GM23248 (cell line): ENCODE measurements at regions of chr2 and their contacts with region 1.

Region 1: GRCh38 chr2:137910641-137911040 is 53.6 kb upstream of the HNMT start:
- DNase-seq: peak; percentile 47
- H3K4me3 ChIP-seq: no peak overlapping the region
- H3K27ac ChIP-seq: no peak overlapping the region
- H3K4me1 ChIP-seq: no peaks in the 10 kb centered on the region
- H3K27me3 ChIP-seq: peaks cover 29% of the 10 kb centered on the region; the same call in 1 of the 2 replicates

Region 2: DNA sequence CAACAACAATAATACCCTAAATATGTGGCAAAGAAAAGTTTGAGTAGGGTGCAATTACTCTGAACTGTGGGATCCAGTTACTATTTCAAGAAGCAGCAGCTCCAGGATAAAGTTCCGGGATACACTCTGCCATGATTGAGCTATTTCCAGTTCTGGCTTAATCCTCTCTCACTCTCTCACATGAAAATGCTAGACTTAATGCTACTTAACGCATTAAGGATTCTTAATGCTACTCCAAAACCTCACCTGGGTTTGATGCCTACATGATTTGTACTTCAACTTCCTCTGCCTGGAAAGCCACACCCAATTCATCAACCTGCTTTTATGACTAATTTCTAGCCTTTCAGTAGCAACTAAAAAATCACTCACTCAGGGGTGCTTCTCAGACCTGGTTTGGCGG is 97.5 kb before region 1 on chr2:
- in situ Hi-C with region 1: no loop called
- DNase-seq: no peak
- H3K4me3 ChIP-seq: no peak overlapping the region
- H3K27ac ChIP-seq: no peak overlapping the region
- H3K4me1 ChIP-seq: no peaks in the 10 kb centered on the region
- H3K27me3 ChIP-seq: no peaks in the 10 kb centered on the region

Region 3: DNA sequence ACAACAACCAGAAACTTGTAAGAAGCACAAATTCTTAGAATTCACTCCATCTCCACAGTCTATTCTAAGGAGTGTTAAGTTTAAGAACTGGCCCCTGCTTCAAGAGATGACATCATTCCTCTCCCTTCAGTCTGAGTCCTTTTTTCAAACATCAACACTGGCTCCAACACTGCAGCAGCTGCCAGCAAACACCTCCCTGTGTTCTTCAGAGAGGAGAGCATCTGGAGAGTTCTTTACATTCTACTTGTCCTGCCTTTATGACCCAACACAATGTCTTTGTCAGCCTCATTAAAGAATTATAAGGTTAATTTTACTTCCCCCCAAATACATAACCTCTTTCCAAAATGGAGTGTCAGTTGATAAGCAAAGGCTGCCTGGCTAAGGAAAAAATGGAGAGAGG is 176.0 kb after region 1 on chr2:
- in situ Hi-C with region 1: loop called (anchors 10 kb)
- DNase-seq: peak; percentile 30
- H3K4me3 ChIP-seq: no peak overlapping the region
- H3K27ac ChIP-seq: no peak overlapping the region
- H3K4me1 ChIP-seq: peaks cover 14% of the 10 kb centered on the region
- H3K27me3 ChIP-seq: peaks cover 14% of the 10 kb centered on the region; the same call in 1 of the 2 replicates

Region 4: GRCh38 chr2:138827426-138828054 is 916.9 kb after region 1 on chr2:
- in situ Hi-C with region 1: loop called (anchors 10 kb)
- DNase-seq: peak; percentile 67
- H3K4me3 ChIP-seq: no peak overlapping the region
- H3K27ac ChIP-seq: no peak overlapping the region
- H3K4me1 ChIP-seq: no peaks in the 10 kb centered on the region
- H3K27me3 ChIP-seq: peaks cover 5% of the 10 kb centered on the region; the same call in 1 of the 2 replicates